ENCODE measurements at regions of chr20 and their contacts with region 1.

Region 1: DNA sequence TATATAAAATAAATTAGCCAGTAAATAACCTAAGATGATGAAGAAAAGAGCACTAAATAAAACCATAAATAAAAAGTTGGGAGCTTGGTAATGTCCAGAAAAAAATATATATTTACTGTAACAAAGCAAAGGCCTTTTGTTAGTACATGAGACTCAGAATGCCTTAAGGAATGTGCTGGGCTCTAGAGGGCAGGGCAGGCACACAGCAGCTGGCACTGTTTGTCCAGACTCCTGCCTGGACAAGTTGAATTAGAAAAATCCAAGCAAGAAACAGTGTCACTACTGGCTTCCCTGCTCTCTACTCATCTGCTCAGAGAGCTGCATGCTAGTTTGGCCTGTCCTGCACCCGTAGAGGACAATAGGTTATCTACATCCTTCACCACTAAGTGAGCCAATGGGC is 8.8 kb downstream of the DEFB129 start:
- DNase-seq: peak; percentile 30
- ATAC-seq: peak; percentile 88
- H3K4me3 ChIP-seq: no peak overlapping the region
- H3K27ac ChIP-seq: no peak overlapping the region
- H3K4me1 ChIP-seq: no peaks in the 10 kb centered on the region
- H3K27me3 ChIP-seq: peaks cover 6% of the 10 kb centered on the region; the same call in 1 of the 2 replicates
- CTCF ChIP-seq: peak; percentile 73

Region 2: DNA sequence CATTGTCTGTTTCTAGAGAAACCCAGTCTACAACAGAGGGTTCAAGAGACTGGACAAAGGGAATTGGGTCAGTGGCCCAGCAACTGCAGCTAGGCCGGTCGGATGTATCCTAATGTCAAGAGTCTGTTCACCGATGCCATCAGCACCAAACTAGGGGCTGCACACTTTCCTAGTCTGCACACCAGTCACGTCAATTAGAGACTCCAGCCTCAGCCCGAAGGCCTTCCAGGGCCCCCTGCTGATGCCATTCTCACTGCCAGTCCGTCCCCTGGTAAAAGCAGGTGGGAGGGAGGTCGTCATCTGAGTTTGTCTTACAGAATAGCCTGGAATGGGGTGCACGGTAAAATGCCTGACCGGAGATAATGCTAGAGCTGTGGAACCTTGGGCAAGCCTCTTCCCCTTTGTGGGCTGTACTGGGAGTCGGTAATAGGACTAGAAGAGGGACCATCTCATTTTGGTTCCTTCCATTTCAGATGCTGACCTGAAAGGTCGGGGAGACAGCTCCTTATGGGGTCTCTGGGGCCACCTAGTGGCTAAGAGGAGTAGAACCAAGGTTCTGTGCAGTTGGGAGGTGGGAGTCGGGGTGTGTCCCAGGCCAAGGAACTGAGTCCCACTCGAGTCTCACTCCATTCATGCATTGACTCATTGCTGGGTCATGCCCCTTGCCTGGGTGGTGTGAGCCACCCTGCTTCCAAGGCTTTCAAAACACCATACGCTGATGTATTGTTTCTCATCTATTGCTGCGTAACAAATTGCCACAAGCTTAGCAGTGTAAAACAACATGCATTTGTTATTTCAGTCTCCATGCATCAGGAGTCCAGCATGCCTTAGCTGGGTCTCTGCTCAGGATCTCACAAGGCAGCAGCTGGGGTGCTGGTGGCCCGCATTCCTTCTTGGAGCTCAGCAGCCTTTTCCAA is 94.6 kb after region 1 on chr20:
- CTCF ChIA-PET with region 1: interaction called, 16 read pairs
- POLR2A ChIA-PET with region 1: interaction called, 8 read pairs
- in situ Hi-C with region 1: no loop called
- intact Hi-C with region 1: no loop called
- DNase-seq: no peak
- ATAC-seq: peak; percentile 24
- H3K4me3 ChIP-seq: no peak overlapping the region
- H3K27ac ChIP-seq: peak overlapping the region; percentile 44; the same call in 1 of the 2 replicates
- H3K4me1 ChIP-seq: peaks cover 22% of the 10 kb centered on the region
- H3K27me3 ChIP-seq: no peaks in the 10 kb centered on the region
- CTCF ChIP-seq: peak; percentile 94

Measured in Panc1 (cell line).